ENCODE measurements at regions of chr1 and their contacts with region 1.

Region 1: DNA sequence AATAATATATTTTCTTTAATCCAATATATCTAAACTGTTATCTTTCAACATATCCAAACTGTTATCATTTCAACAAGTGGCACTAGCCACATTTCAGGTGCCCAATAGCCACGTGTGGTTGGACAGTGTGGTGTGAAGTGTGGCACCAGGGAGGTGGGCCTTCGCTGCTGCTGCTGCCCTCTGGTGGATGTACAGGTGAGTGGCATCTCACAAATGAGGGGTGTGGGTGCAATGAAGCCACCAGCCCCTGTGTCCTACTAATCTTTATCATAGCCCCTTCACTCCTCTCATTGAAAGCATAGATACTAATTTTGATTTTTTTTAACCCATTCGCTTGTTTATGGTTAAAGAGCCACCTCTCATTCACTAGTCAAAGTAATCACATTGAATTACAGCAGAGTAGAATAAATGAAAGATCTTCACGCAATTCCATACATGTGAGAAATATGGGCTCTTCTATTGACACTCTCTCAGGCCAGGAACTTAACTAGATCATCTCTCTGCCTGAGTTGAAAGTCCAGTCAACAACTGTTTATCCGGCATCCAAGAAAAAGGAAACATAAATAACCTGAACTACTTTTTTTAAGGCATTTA is 499.2 kb downstream of the OMA1 start:
- DNase-seq: no peak
- H3K4me3 Mint-ChIP-seq: no peak overlapping the region
- H3K27ac Mint-ChIP-seq: no peak overlapping the region
- H3K4me1 Mint-ChIP-seq: no peaks in the 10 kb centered on the region
- H3K27me3 Mint-ChIP-seq: peaks cover under 1% of the 10 kb centered on the region

Region 2: DNA sequence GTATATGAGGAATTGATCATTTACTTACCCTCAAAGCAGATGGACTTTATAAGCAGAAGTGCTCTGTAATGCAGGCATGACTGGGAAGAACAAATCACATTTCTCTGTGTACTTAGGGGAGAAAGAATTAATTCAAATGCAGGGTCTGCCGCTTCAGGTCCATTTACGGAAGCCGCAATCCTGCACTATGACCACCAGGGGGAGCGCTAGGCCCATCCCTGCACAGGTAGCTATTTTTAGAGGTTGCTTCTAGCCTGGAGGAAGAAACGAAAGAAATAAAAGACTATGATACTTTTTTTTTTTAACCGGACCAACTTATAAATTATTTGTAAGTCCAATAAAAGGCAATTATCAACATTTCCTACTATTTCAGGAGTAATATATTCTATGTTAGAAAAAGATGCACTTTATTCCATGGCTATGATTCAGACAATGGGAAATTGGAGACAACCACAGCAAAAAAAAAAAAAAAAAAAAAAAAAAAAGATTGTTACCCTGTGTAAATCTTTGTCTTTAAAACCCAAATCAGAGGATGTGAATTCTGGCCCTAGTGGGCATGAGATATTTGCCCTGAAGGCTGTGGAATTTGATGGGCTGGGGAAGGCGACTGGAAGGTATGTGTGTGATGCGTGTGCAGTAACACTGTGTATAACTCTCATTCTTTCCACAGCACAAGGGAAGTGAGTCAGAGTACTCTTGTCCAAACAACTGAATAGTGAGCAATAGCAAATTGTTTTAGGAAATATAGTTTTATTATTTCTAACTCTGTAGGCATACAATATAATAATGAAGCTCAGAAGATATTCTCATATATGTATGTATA is 1215.3 kb before region 1 on chr1:
- intact Hi-C with region 1: loop called (anchors 5 kb)
- DNase-seq: peak; percentile 43
- H3K4me3 Mint-ChIP-seq: no peak overlapping the region
- H3K27ac Mint-ChIP-seq: no peak overlapping the region
- H3K4me1 Mint-ChIP-seq: no peaks in the 10 kb centered on the region
- H3K27me3 Mint-ChIP-seq: no peaks in the 10 kb centered on the region

Region 3: GRCh38 chr1:57943365-57943764 is 104.0 kb before region 1 on chr1:
- intact Hi-C with region 1: no loop called
- DNase-seq: no peak
- H3K4me3 Mint-ChIP-seq: no peak overlapping the region
- H3K27ac Mint-ChIP-seq: no peak overlapping the region
- H3K4me1 Mint-ChIP-seq: no peaks in the 10 kb centered on the region
- H3K27me3 Mint-ChIP-seq: no peaks in the 10 kb centered on the region

Region 4: GRCh38 chr1:57966751-57967406 is 80.5 kb before region 1 on chr1:
- intact Hi-C with region 1: no loop called
- DNase-seq: no peak
- H3K4me3 Mint-ChIP-seq: no peak overlapping the region
- H3K27ac Mint-ChIP-seq: no peak overlapping the region
- H3K4me1 Mint-ChIP-seq: no peaks in the 10 kb centered on the region
- H3K27me3 Mint-ChIP-seq: no peaks in the 10 kb centered on the region

Region 5: DNA sequence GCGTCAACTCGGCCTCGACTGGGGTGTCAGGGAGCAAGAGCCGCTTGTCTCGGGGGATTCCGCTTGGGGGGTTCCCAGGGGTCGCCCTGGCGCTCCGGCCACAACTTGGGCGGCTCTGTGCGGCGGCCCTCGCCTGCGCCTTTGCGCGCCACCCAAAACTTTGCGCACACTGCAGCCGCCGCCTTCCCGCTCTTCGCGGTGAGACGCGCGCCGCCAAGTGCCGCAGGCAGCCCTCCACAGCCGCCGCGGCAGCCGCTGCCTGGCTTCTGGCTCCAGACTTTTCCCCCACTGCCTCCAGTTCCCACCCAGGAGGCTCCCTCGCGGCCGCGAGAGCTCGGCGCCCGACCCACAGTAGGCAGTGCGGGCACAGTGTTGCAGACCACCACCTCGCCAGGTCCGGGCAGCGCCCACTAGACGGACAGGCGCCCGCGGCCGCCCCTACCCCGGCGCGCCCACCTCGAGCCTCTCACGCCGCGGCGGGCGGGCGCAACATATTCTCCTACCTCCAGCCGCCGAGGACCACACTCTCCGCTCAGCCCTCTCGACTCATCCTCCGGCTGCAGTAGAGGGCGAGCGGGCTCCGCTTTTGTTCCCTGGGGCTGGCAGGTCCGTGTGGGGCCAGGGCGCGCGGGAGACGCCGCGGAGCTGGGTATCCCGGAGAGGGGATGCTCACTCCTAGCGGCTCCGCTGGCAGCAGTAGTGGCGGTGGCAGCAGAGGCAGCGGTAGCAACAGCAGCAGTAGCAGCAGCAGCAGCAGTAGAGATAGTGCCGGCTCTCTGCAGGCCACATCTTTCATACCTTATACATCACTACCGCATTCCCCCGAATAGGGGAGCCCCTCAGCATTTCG is 202.6 kb after region 1 on chr1:
- intact Hi-C with region 1: no loop called
- DNase-seq: no peak
- H3K4me3 Mint-ChIP-seq: peak overlapping the region; percentile 18
- H3K27ac Mint-ChIP-seq: no peak overlapping the region
- H3K4me1 Mint-ChIP-seq: peaks cover 2% of the 10 kb centered on the region
- H3K27me3 Mint-ChIP-seq: peaks cover 55% of the 10 kb centered on the region